PC-9 (cell line): ENCODE measurements at regions of chr15 and their contacts with region 1.

Region 1: DNA sequence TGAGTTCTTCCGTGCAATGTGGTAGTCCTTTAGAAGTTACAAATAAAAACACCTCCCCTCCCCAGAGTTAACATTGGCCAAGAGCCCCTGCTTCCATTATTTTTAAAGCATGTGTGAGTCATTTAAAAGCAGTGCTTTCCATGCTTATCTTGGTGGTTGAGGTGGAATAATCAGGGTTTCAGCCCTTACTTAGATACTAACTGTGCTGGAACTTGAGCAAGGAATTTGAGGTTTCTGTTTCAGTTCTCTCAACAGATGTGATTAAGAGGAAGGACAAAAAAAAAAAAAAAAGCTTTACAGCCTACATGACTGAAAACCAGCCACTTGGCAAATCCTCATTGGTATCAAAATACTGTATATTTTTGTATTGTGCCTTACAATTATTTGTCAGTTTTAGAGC is 64.5 kb downstream of the CGNL1 start:
- DNase-seq: peak in 1 of 2 experiments; percentile 47
- H3K4me3 ChIP-seq: no peak overlapping the region
- H3K27ac ChIP-seq: no peak overlapping the region
- H3K4me1 ChIP-seq: peaks cover 7% of the 10 kb centered on the region
- H3K27me3 ChIP-seq: no peaks in the 10 kb centered on the region
- CTCF ChIP-seq: no peak

Region 2: GRCh38 chr15:57158589-57158988 is 282.2 kb before region 1 on chr15:
- CTCF ChIA-PET with region 1: no interaction called
- POLR2A ChIA-PET with region 1: no interaction called
- intact Hi-C with region 1: no loop called
- DNase-seq: no peak
- H3K4me3 ChIP-seq: no peak overlapping the region
- H3K27ac ChIP-seq: no peak overlapping the region
- H3K4me1 ChIP-seq: no peaks in the 10 kb centered on the region
- H3K27me3 ChIP-seq: no peaks in the 10 kb centered on the region
- CTCF ChIP-seq: no peak

Region 3: DNA sequence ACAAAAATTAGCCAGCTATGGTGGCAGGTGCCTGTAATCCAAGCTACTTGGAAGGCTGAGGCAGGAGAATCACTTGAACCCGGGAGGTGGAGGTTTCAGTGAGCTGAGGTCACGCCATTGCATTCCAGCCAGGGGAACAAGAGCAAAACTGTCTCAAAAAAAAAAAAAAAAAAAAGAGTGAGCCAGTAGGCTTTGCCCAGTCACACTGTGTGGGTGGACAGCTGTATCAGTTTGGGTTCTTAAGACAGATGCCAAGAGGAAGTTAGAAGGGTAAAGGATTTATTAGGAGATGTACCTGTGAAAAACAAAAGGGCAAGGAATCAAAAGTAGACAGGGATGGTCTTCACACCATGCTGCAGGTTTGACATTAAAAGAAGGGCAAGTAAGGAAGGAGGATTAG is 150.6 kb before region 1 on chr15:
- CTCF ChIA-PET with region 1: no interaction called
- POLR2A ChIA-PET with region 1: interaction called, 35 read pairs
- intact Hi-C with region 1: no loop called
- DNase-seq: no peak
- H3K4me3 ChIP-seq: no peak overlapping the region
- H3K27ac ChIP-seq: no peak overlapping the region
- H3K4me1 ChIP-seq: no peaks in the 10 kb centered on the region
- H3K27me3 ChIP-seq: no peaks in the 10 kb centered on the region
- CTCF ChIP-seq: no peak

Region 4: GRCh38 chr15:57395292-57395691 is 45.5 kb before region 1 on chr15:
- CTCF ChIA-PET with region 1: interaction called, 3 read pairs
- POLR2A ChIA-PET with region 1: interaction called, 20 read pairs
- intact Hi-C with region 1: no loop called
- DNase-seq: no peak
- H3K4me3 ChIP-seq: no peak overlapping the region
- H3K27ac ChIP-seq: no peak overlapping the region
- H3K4me1 ChIP-seq: no peaks in the 10 kb centered on the region
- H3K27me3 ChIP-seq: no peaks in the 10 kb centered on the region
- CTCF ChIP-seq: no peak